B cell (primary cell): ENCODE measurements at regions of chr11 and their contacts with region 1.

Region 1: DNA sequence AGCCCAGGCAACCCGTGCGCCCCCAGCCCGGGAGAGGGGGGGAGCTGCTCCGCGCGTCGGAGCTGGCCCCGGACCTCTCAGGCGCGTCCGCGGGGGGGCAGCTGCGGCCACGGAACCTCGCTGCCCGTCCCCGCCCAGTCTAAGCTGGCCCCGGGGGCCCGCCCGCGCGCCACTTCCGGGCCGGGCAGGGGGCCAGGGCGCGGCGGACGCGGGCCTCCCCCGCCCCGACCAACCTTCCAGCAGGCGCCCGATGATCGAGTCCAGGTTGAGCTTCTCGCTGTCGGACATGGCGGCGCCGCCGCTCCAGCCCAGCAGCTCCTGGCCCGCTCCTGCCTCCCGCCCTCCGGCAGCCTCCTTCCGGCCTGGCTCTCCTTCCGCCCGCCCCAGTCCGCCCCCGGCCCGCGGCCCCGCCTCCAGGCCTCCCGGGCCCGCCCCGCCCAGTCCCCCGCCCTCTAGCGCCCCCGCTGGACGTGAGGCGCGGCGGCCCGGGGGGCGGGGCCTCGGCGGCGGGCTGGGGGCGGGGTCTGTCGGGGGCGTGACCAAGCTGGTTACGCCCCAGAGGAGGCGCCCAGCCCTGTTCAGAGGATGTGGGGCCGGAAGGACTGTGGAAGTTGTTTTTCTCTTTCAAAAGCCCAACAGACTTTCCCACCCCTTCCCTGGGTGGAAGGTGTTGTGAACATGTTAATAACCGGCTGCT is at the start of gene PPP1CA:
- DNase-seq: peak; percentile 93
- ATAC-seq: peak; percentile 72
- H3K4me3 ChIP-seq: peak within 1 kb of the TSS; percentile 65 to 92 (median 85)
- H3K4me3 Mint-ChIP-seq: peak within 1 kb of the TSS; percentile 87
- H3K27ac ChIP-seq: peak within 1 kb of the TSS; percentile 70 to 83
- H3K27ac Mint-ChIP-seq: peak within 1 kb of the TSS; percentile 95
- H3K4me1 ChIP-seq: peaks cover 57 to 79% of the 10 kb centered on the region in 2 donors
- H3K4me1 Mint-ChIP-seq: peaks cover 67% of the 10 kb centered on the region
- H3K27me3 ChIP-seq: no peaks in the 10 kb centered on the region
- H3K27me3 Mint-ChIP-seq: no peaks in the 10 kb centered on the region
- CTCF ChIP-seq: peak; percentile 70
- total RNA-seq, gene PPP1CA: 248 and 251 TPM in 2 replicates

Region 2: DNA sequence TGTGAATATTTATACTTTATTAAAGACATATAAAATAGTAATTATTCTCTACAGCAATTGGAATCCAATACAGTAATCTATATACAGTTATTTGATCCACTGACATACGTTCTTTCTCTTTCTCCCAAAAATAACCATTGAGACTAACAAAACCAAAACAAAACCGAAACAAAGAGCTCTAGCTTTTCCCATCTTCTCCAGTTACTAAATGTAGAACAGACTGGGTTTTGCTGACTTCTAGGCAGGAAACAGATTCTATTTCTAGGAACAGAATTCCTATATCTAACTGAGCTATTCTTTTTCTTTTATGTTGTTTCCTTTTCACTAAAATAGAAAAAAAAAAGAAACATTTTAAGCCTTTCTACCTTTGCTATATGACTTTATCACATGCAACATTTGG is 1251.5 kb before region 1 on chr11:
- CTCF ChIA-PET with region 1: no interaction called
- POLR2A ChIA-PET with region 1: no interaction called
- intact Hi-C with region 1: no loop called
- DNase-seq: no peak
- ATAC-seq: no peak
- H3K4me3 ChIP-seq: no peak overlapping the region
- H3K4me3 Mint-ChIP-seq: peak overlapping the region; percentile 10
- H3K27ac ChIP-seq: no peak overlapping the region
- H3K27ac Mint-ChIP-seq: peak overlapping the region; percentile 16
- H3K4me1 ChIP-seq: peaks cover 22 to 38% of the 10 kb centered on the region in 2 donors
- H3K4me1 Mint-ChIP-seq: peaks cover 45% of the 10 kb centered on the region
- H3K27me3 ChIP-seq: no peaks in the 10 kb centered on the region
- H3K27me3 Mint-ChIP-seq: no peaks in the 10 kb centered on the region
- CTCF ChIP-seq: no peak

Region 3: DNA sequence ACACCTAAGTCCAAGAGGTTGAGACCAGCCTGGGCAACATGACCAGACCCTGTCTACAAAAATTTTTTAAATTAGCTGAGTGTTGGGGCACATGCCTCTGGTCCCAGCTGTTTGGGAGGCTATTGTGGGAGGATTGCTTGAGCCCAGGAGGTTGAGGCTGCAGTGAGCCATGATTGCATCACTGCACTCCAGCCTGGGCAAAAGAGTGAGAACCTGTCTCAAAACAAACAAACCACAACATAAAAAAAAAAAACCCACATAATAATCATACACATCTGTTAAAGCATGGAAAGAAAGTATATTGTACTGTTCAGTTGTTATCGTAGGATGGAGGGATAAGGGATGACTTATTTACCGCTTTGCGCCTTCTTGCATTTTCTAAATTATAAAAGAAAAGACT is 171.2 kb before region 1 on chr11:
- CTCF ChIA-PET with region 1: no interaction called
- POLR2A ChIA-PET with region 1: no interaction called
- intact Hi-C with region 1: no loop called
- DNase-seq: no peak
- ATAC-seq: no peak
- H3K4me3 ChIP-seq: no peak overlapping the region
- H3K4me3 Mint-ChIP-seq: no peak overlapping the region
- H3K27ac ChIP-seq: no peak overlapping the region
- H3K27ac Mint-ChIP-seq: no peak overlapping the region
- H3K4me1 ChIP-seq: peaks cover 0 to 3% of the 10 kb centered on the region in 2 donors
- H3K4me1 Mint-ChIP-seq: peaks cover 10% of the 10 kb centered on the region
- H3K27me3 ChIP-seq: no peaks in the 10 kb centered on the region
- H3K27me3 Mint-ChIP-seq: no peaks in the 10 kb centered on the region
- CTCF ChIP-seq: no peak

Region 4: DNA sequence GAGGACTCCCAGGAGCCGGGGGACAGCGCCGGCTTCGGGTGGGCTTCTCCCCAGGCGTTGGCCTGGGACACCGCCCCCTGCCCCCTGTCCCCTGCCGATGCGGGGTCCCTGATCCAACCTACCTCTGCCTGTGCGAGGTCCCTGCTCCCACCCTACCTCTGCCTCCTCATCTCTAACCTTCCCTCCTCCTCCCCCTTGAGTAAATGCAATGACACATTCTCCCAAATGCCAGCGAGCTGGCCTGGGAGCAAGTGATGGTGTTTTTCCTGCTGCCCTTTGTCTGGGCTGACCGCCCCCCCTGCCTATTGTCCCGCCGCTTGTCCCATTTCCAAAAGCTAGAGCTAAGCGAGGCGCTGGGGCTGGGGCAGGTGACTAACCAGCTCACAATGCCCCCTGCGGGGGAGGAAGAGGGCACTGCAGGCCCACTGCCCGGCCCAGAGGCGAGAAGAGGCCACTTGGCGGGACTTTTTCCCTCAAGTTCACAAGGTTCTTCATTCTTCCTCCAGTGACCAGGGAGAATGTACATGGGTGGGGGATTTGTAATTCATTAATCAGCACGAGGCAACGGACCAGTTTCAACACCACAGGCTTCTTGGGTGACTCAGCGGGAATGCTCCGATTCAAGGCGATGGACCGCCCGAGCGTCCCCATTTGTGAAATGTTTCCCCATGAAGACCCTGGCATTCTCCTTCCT is 27.6 kb before region 1 on chr11:
- CTCF ChIA-PET with region 1: interaction called, 6 read pairs
- POLR2A ChIA-PET with region 1: interaction called, 12 read pairs
- intact Hi-C with region 1: no loop called
- DNase-seq: peak; percentile 77
- ATAC-seq: peak; percentile 35
- H3K4me3 ChIP-seq: peak overlapping the region in 4 of 5 experiments; percentile 48 to 95 (median 76)
- H3K4me3 Mint-ChIP-seq: peak overlapping the region; percentile 94
- H3K27ac ChIP-seq: peak overlapping the region; percentile 41 to 89
- H3K27ac Mint-ChIP-seq: peak overlapping the region; percentile 92
- H3K4me1 ChIP-seq: peaks cover 40 to 47% of the 10 kb centered on the region in 2 donors
- H3K4me1 Mint-ChIP-seq: peaks cover 50% of the 10 kb centered on the region
- H3K27me3 ChIP-seq: no peaks in the 10 kb centered on the region
- H3K27me3 Mint-ChIP-seq: no peaks in the 10 kb centered on the region
- CTCF ChIP-seq: peak; percentile 66

Region 5: DNA sequence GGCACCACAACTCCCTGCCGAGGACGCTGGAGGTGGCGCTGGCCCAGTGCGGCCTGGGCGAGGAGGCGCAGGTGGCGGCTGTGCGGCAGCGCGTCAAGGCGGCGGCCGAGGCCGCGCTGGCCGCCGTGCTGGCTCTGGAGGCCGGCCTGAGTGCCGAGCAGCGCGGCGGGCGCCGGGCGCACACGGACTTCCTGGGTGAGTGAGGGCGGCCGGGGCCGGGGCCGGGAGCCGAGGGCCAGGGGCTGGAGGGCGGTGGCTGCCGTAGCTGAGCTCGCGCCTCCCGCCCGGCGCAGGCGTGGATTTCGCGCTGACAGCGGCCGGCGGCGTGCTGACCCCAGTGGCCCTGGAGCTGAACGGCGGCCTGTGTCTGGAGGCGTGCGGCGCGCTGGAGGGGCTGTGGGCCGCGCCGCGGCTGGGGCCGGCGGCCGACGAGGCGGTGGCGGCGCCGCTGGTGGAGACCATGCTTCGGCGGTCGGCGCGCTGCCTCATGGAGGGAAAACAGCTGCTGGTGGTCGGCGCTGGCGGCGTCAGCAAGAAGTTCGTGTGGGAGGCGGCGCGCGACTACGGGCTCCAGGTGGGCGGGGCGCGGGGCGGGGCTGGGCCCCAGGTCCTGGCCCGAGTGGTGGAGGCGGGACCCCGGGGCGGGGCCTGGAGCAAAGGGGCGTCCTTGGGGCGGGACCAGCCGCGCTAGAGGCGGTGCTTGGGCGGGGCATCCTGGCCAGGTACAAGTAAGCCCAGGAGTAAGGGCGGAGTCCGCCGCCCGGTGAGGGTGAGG is 19.2 kb after region 1 on chr11:
- CTCF ChIA-PET with region 1: interaction called, 121 read pairs
- POLR2A ChIA-PET with region 1: interaction called, 195 read pairs
- intact Hi-C with region 1: loop called (anchors 1 kb)
- DNase-seq: peak; percentile 98
- ATAC-seq: peak; percentile 85
- H3K4me3 ChIP-seq: peak overlapping the region in 4 of 5 experiments; percentile 32 to 63 (median 53)
- H3K4me3 Mint-ChIP-seq: peak overlapping the region; percentile 83
- H3K27ac ChIP-seq: peak overlapping the region; percentile 43 to 71
- H3K27ac Mint-ChIP-seq: peak overlapping the region; percentile 91
- H3K4me1 ChIP-seq: peaks cover 49 to 54% of the 10 kb centered on the region in 2 donors
- H3K4me1 Mint-ChIP-seq: peaks cover 50% of the 10 kb centered on the region
- H3K27me3 ChIP-seq: no peaks in the 10 kb centered on the region
- H3K27me3 Mint-ChIP-seq: no peaks in the 10 kb centered on the region
- CTCF ChIP-seq: no peak

Region 6: DNA sequence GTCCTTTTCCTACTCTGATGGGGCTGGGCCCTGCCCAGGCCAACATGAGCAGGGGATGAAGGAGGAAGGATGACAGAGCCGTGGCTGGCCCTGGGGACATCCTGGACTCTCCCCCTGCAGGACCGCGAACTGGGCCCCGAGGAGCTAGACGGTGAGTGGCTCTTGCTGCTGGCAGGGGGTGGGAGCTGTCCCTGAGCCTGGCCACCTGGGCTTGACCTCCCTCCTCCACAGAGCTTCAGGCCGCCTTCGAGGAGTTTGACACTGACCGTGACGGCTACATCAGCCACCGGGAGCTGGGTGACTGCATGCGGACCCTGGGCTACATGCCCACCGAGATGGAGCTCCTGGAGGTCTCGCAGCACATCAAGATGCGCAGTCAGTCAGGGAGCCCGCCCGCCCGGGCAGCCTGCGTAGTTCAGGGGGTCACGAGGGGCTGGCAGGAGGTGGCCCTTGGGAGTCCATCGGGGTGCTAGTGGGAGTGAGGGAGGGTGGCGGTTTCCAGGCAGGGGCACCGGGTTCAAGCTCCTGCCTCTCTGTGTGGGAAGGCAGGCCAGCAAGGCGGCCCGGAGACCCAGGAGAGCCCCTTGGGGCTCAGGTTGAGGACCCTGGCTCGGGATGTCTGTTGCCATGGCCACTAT is 54.5 kb after region 1 on chr11:
- CTCF ChIA-PET with region 1: interaction called, 19 read pairs
- POLR2A ChIA-PET with region 1: interaction called, 20 read pairs
- intact Hi-C with region 1: no loop called
- DNase-seq: no peak
- ATAC-seq: no peak
- H3K4me3 ChIP-seq: no peak overlapping the region
- H3K4me3 Mint-ChIP-seq: no peak overlapping the region
- H3K27ac ChIP-seq: no peak overlapping the region
- H3K27ac Mint-ChIP-seq: peak overlapping the region; percentile 92
- H3K4me1 ChIP-seq: peaks cover 48 to 88% of the 10 kb centered on the region in 2 donors
- H3K4me1 Mint-ChIP-seq: peaks cover 44% of the 10 kb centered on the region
- H3K27me3 ChIP-seq: no peaks in the 10 kb centered on the region
- H3K27me3 Mint-ChIP-seq: no peaks in the 10 kb centered on the region
- CTCF ChIP-seq: no peak

Region 7: DNA sequence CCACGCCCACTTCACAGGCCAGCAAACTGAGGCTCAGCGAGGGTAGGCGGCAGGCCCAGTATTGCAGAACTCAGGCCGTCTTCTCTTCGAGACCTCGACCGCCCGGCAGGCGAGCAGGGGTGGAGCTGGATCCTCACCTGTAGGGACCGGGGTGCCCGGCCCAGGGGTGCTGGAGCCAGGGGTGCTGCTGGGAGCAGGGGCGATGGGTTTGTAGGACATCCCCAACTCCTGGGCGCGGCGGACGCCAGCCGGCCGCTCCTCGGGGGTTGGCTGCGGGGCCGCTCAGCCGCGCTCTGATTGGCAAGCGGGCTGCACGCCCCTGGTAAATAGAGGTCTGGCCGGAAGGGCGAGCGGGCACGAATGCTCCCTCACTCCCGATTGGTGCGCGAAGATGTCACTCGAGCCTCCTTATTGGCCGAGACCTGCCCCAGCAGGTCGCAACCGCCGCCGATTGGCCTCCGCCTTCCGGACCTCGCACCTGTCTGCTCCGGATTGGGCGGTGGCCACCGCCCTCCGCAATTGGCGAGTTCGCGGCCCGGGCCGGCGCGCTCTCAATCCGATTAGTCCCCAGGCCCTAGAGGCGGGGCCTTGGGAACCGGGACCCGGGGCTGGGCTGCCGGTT is 106.3 kb after region 1 on chr11 and contains the start of gene CDK2AP2:
- CTCF ChIA-PET with region 1: interaction called, 20 read pairs
- POLR2A ChIA-PET with region 1: interaction called, 12 read pairs
- intact Hi-C with region 1: loop called (anchors 1 kb)
- DNase-seq: peak; percentile 100
- ATAC-seq: peak; percentile 74
- H3K4me3 ChIP-seq: peak within 1 kb of the TSS; percentile 57 to 88 (median 79)
- H3K4me3 Mint-ChIP-seq: peak within 1 kb of the TSS; percentile 92
- H3K27ac ChIP-seq: peak within 1 kb of the TSS; percentile 84 to 98
- H3K27ac Mint-ChIP-seq: peak within 1 kb of the TSS; percentile 95
- H3K4me1 ChIP-seq: peaks cover 39 to 46% of the 10 kb centered on the region in 2 donors
- H3K4me1 Mint-ChIP-seq: peaks cover 42% of the 10 kb centered on the region
- H3K27me3 ChIP-seq: peaks cover 0 to 16% (median 4%) of the 10 kb centered on the region in 4 experiments
- H3K27me3 Mint-ChIP-seq: peaks cover 8% of the 10 kb centered on the region
- CTCF ChIP-seq: no peak
- total RNA-seq, gene CDK2AP2: 50.3 and 62.7 TPM in 2 replicates